ENCODE measurements at regions of chr12 and their contacts with region 1.

Region 1: GRCh38 chr12:19186722-19187661 is 57.5 kb downstream of the PLEKHA5 start:
- DNase-seq: no peak
- ATAC-seq: peak; percentile 76

Region 2: GRCh38 chr12:18864900-18865561 is 322.0 kb before region 1 on chr12:
- intact Hi-C with region 1: loop called in 1 of 2 experiments (anchors 5 kb)
- DNase-seq: no peak
- ATAC-seq: no peak